ENCODE measurements at regions of chr11 and their contacts with region 1.

Region 1: GRCh38 chr11:14249121-14249963 is 109.6 kb downstream of the RRAS2 start:
- DNase-seq: peak; percentile 46 to 51
- ATAC-seq: peak; percentile 17 to 69 (median 48)
- H3K4me3 ChIP-seq: no peak overlapping the region
- H3K27ac ChIP-seq: no peak overlapping the region
- H3K4me1 ChIP-seq: peaks cover 0 to 20% (median 5%) of the 10 kb centered on the region in 9 donors
- H3K27me3 ChIP-seq: peaks cover 0 to 59% (median 16%) of the 10 kb centered on the region in 7 donors
- CTCF ChIP-seq: peak; percentile 83 to 95 (median 91)

Region 2: DNA sequence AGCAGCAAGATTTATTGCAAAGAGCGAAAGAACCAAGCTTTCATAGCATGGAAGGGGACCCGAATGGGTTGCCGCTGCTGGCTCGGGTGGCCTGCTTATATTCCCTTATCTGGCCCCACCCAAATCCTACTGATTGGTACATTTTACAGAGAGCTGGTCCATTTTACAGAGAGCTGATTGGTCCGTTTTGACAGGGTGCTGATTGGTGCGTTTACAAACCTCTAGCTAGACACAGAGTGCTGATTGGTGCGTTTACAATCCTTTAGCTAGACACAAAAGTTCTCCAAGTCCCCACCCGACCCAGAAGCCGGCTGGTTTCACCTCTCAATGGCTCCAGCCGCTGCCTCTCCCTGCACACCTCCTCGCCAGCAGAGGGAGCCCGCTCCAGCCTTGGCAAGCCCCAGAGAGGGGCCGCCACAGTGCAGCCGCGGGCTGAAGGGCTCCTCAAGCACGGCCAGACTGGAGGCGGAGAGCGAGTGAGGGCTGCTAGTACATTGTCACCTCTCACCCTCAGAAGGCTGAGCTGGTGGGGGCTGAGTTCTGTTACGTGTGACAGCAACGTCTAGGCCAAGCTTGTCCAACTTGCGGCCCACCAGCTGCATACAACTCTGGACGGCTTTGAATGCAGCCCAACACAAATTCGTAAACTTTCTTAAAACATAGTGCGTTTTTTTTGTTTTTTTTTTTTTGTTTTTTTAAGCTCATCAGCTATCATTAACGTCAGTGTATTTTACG is 762.2 kb before region 1 on chr11:
- intact Hi-C with region 1: loop called in 1 of 10 experiments (anchors 10 kb)
- DNase-seq: peak; percentile 47 to 72
- ATAC-seq: peak in 7 of 8 donors; percentile 33 to 93 (median 82)
- H3K4me3 ChIP-seq: peak overlapping the region in 6 of 10 donors; percentile 18 to 46 (median 42)
- H3K27ac ChIP-seq: no peak overlapping the region
- H3K4me1 ChIP-seq: no peaks in the 10 kb centered on the region
- H3K27me3 ChIP-seq: peaks cover 0 to 12% (median 0%) of the 10 kb centered on the region in 7 donors
- CTCF ChIP-seq: peak in 8 of 9 donors; percentile 34 to 61 (median 54)

Region 3: GRCh38 chr11:13772223-13773046 is 476.9 kb before region 1 on chr11:
- intact Hi-C with region 1: loop called (anchors 2 to 5 kb)
- DNase-seq: peak in 1 of 2 donors; percentile 7
- ATAC-seq: peak in 3 of 8 donors; percentile 46 to 62 (median 56)
- H3K4me3 ChIP-seq: no peak overlapping the region
- H3K27ac ChIP-seq: no peak overlapping the region
- H3K4me1 ChIP-seq: no peaks in the 10 kb centered on the region
- H3K27me3 ChIP-seq: peaks cover 0 to 46% (median 28%) of the 10 kb centered on the region in 7 donors
- CTCF ChIP-seq: peak; percentile 14 to 65 (median 53)